Tibial artery (tissue), 4 donors: ENCODE measurements at regions of chr10 and their contacts with region 1.

Region 1: DNA sequence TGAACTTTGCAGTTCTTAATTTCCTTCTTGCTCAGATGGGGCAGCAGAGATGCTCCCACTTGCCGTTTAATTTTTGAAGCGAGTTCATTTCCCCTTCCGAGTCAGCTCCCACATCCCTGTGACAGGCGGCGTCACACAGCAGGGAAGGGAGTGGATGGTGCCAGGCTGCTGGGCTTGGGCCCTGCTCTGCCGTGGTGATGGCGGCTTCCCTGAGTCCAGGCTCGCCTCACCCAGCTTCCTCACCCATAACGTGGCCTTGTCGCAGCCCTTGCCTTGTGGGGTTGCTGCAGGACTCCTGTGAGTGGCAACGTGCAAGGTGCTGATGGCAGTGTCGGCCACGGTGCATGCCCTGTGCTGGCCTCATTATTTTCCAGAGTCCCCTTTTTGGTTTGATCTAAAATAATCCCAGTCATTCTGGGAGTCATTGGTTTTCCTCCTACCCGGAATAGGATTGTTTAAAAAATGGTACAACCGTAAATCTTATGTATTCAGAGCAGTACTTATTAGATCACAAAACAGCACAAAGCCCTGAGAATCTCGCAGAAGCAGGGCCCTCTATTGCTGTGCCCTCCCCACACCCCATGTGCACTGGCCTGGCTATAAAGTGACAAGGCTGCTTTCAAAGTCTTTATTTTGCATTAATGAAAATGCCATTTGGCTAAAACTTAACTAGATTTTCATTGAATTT is 260.1 kb downstream of the WDR37 start:
- DNase-seq: no peak
- H3K4me3 ChIP-seq: no peak overlapping the region
- H3K27ac ChIP-seq: peak overlapping the region; percentile 39 to 44
- H3K4me1 ChIP-seq: peaks cover 0 to 22% (median 5%) of the 10 kb centered on the region in 4 donors
- H3K27me3 ChIP-seq: no peaks in the 10 kb centered on the region
- CTCF ChIP-seq: no peak

Region 2: DNA sequence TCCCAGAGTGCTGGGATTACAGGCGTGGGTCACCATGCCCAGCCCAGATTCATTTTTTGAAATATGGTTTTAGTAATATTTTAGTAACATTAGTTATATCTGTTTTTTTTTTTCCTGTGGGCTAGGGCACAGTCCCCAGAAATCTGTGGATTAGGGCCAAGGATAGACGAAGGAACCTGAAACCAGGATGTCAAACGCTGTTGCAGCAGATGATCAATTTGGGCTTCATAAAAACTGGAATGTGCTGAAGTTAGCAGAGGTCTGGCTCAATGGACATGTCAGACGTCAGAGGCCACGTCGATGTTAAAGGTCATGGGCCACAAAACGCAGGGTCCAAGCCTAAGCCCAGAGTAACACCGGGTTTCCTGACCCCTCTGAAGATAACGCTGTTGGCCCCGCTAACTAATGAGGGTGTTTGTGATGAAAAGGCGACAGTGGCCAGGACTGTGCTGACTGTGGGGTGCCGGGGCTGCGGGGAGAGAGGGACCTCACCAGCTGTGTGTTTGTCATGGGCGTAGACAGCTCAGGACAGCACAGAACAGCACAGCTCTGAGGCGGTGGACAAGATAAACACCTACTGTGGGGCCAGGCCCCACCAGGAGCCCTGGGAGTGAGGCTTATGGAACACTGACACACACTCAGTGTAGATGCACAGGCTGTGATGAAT is 351.8 kb before region 1 on chr10:
- intact Hi-C with region 1: loop called (anchors 5 kb)
- DNase-seq: no peak
- H3K4me3 ChIP-seq: no peak overlapping the region
- H3K27ac ChIP-seq: no peak overlapping the region
- H3K4me1 ChIP-seq: no peaks in the 10 kb centered on the region
- H3K27me3 ChIP-seq: peaks cover 0 to 5% of the 10 kb centered on the region in 2 donors
- CTCF ChIP-seq: no peak

Region 3: GRCh38 chr10:1360011-1360557 is 43.8 kb after region 1 on chr10:
- intact Hi-C with region 1: no loop called
- DNase-seq: no peak
- H3K4me3 ChIP-seq: no peak overlapping the region
- H3K27ac ChIP-seq: no peak overlapping the region
- H3K4me1 ChIP-seq: peaks cover 0 to 11% (median 1%) of the 10 kb centered on the region in 4 donors
- H3K27me3 ChIP-seq: peaks cover 0 to 3% of the 10 kb centered on the region in 2 donors
- CTCF ChIP-seq: no peak

Region 4: DNA sequence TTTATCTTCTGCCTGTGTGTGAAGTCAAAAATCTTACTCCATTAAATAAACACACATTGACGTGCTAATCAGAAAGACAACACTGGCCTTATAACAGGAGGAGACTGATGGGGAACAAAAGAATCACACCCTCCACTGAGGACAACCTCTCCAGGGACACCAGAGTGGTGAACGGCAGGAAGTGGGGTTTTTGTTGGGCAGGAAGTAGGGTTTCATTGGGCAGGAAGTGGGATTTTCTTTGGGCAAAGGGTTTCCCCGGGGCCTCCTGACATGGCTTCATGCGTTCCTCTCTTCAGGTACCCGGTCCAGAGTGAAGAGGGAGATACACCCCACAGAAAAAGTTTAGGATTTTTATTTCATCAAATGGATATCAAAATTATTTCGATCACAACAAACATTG is 390.4 kb after region 1 on chr10:
- intact Hi-C with region 1: loop called (anchors 10 kb)
- DNase-seq: no peak
- H3K4me3 ChIP-seq: no peak overlapping the region
- H3K27ac ChIP-seq: no peak overlapping the region
- H3K4me1 ChIP-seq: no peaks in the 10 kb centered on the region
- H3K27me3 ChIP-seq: peaks cover 0 to 5% of the 10 kb centered on the region in 2 donors
- CTCF ChIP-seq: no peak